HAP-1 (cell line): ENCODE measurements at regions of chr15 and their contacts with region 1.

Region 1: GRCh38 chr15:44971036-44971435 is 14.5 kb downstream of the TERB2 start:
- DNase-seq: no peak
- H3K4me3 ChIP-seq: no peak overlapping the region
- H3K4me1 ChIP-seq: no peaks in the 10 kb centered on the region
- H3K27me3 ChIP-seq: no peaks in the 10 kb centered on the region

Region 2: DNA sequence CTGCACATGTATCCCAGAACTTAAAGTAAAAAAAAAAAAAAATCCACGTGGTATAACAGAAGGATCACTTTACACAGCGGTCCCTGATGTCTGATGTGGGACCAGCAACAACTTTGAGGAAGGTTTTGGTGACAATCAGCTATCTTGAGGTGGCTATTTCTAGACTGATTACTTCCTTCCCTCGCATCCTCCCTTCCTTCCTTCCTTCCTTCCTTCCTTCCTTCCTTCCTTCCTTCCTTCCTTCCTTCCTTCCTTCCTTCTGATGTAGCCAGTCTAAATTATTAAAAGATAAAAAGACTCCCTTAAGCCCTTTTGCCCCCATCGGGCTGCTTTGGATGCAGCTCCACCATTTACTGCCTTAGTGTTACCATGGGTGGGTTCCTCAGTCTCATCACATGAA is 66.9 kb after region 1 on chr15:
- in situ Hi-C with region 1: loop called (anchors 5 kb)
- DNase-seq: no peak
- H3K4me3 ChIP-seq: no peak overlapping the region
- H3K4me1 ChIP-seq: no peaks in the 10 kb centered on the region
- H3K27me3 ChIP-seq: no peaks in the 10 kb centered on the region